ENCODE measurements at regions of chr2 and their contacts with region 1.

Region 1: GRCh38 chr2:55617175-55618024 is at the start of gene PPP4R3B:
- DNase-seq: peak; percentile 99 to 100
- ATAC-seq: peak; percentile 83 to 86
- H3K4me3 ChIP-seq: peak within 1 kb of the TSS; percentile 85 to 99 (median 94)
- H3K27ac ChIP-seq: peak within 1 kb of the TSS; percentile 90 to 100 (median 96)
- H3K4me1 ChIP-seq: peaks cover 28 to 44% of the 10 kb centered on the region in 2 donors
- H3K27me3 ChIP-seq: no peaks in the 10 kb centered on the region
- CTCF ChIP-seq: peak; percentile 56 to 84 (median 69)
- POLR2A ChIP-seq: peak; percentile 87 to 93
- total RNA-seq, gene PPP4R3B: 20.6 to 30.3 (median 25.4) TPM

Region 2: GRCh38 chr2:55232084-55232862 is 385.1 kb before region 1 on chr2 and contains the starts of genes CLHC1 and RPS27A:
- in situ Hi-C with region 1: no loop called
- intact Hi-C with region 1: loop called (anchors 10 kb)
- DNase-seq: peak; percentile 86 to 87
- ATAC-seq: peak; percentile 98
- H3K4me3 ChIP-seq: peak within 1 kb of the TSS; percentile 72 to 96 (median 87)
- H3K27ac ChIP-seq: peak within 1 kb of the TSS; percentile 89 to 96 (median 92)
- H3K4me1 ChIP-seq: peaks cover 23 to 24% of the 10 kb centered on the region in 2 donors
- H3K27me3 ChIP-seq: no peaks in the 10 kb centered on the region
- CTCF ChIP-seq: peak in 2 of 5 experiments; percentile 9 to 16
- POLR2A ChIP-seq: peak; percentile 85 to 87
- total RNA-seq, gene CLHC1: 0.46 to 4.9 (median 0.85) TPM in 3 of 4 donors, not detected in the other
- total RNA-seq, gene RPS27A: 884 to 1,266 (median 965) TPM

Region 3: DNA sequence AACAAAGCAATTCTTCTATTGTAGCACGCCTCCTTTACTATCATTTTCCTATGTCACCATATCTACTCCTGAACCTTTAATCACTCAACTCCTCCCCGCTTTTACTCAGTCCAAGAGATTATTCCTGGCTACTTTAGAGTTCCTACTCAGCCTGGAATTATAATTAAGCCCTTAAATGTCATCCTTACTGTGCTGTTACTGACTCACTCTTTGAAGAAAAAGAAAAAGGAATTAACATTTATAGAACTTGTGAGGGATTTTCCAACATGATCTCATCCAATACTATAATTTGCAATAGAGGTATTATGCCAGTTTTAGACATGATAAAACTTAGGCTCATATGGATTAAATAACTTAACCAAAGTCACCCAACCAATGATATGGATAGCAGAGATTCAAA is 259.5 kb before region 1 on chr2:
- in situ Hi-C with region 1: no loop called
- intact Hi-C with region 1: no loop called
- DNase-seq: no peak
- ATAC-seq: no peak
- H3K4me3 ChIP-seq: no peak overlapping the region
- H3K27ac ChIP-seq: no peak overlapping the region
- H3K4me1 ChIP-seq: no peaks in the 10 kb centered on the region
- H3K27me3 ChIP-seq: no peaks in the 10 kb centered on the region
- CTCF ChIP-seq: no peak
- POLR2A ChIP-seq: no peak

Region 4: GRCh38 chr2:55581874-55582547 is 35.4 kb before region 1 on chr2:
- in situ Hi-C with region 1: no loop called
- intact Hi-C with region 1: loop called (anchors 1 kb)
- DNase-seq: peak; percentile 37 to 70
- ATAC-seq: peak; percentile 97
- H3K4me3 ChIP-seq: peak overlapping the region in 1 of 4 donors; percentile 23
- H3K27ac ChIP-seq: peak overlapping the region; percentile 34 to 69 (median 63)
- H3K4me1 ChIP-seq: peaks cover 16 to 17% of the 10 kb centered on the region in 2 donors
- H3K27me3 ChIP-seq: no peaks in the 10 kb centered on the region
- CTCF ChIP-seq: no peak
- POLR2A ChIP-seq: no peak

Region 5: DNA sequence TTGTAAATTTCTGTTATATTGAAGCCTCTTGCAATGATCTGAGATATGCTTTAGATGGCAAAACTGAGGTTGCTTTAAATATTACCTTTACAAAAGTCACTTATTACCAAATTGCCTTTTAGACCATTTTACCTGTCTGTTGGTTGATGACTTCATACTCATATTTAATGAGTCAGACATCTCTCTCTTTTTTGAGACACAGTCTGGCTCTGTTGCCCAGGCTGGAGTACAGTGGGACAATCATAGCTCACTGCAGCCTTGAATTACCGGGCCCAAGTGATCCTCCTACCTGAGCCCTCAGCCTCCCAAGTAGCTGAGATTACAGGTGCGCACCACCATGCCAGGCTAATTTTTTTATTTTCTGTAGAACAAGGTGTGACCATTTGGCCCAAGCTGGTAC is 11.5 kb after region 1 on chr2:
- in situ Hi-C with region 1: no loop called
- intact Hi-C with region 1: no loop called
- DNase-seq: no peak
- ATAC-seq: no peak
- H3K4me3 ChIP-seq: no peak overlapping the region
- H3K27ac ChIP-seq: no peak overlapping the region
- H3K4me1 ChIP-seq: no peaks in the 10 kb centered on the region
- H3K27me3 ChIP-seq: no peaks in the 10 kb centered on the region
- CTCF ChIP-seq: no peak
- POLR2A ChIP-seq: no peak

Region 6: DNA sequence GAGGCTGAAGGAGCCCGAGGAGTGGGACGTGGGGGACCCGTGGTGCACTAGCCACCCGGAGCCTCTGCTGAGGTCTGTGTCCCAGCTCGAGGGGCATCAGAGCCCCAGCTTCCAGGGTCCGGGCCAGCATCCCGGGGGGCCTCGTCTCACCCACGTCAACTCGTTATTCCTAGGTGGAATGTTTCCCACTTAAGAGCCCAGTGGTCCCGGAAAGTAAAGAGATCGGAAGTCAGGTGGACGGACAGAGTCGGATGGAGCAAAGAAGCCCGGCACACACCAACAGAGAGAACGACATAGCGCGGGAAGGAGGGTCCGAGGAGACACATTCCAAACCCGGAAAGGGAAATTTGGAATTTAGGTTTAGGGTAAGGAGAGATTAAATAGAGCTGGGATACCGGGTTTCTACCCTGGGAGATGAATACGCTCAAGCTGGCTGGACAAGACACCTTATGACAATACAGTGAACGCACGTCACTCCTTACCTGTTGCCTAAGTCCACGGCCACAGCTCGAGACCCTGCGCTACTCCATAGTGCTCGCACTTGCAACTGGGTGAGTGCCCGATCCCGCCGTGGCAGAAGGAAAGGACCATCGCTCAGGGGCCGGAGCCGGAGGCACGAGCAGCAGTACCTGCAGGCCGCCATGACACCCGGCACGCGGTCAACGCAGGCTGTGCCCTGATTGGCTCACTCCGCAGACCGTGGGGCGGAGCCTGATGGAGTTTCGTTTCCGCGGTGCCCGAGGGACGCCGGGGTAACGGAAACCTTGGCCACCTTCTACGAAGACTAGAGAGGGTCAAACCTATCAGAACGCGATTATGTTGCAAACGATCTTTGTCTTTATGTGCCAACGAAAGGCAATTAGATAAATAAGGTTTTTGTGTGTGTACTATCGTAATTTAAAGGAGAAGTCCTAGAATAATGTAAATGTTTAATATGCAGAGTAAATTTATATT is 76.1 kb after region 1 on chr2 and contains the start of gene PNPT1:
- in situ Hi-C with region 1: no loop called
- intact Hi-C with region 1: loop called (anchors 2 kb)
- DNase-seq: peak; percentile 90 to 91
- ATAC-seq: peak; percentile 98 to 99
- H3K4me3 ChIP-seq: peak within 1 kb of the TSS; percentile 65 to 91 (median 86)
- H3K27ac ChIP-seq: peak within 1 kb of the TSS; percentile 66 to 78 (median 68)
- H3K4me1 ChIP-seq: no peaks in the 10 kb centered on the region
- H3K27me3 ChIP-seq: no peaks in the 10 kb centered on the region
- CTCF ChIP-seq: no peak
- POLR2A ChIP-seq: peak in 1 of 2 donors; percentile 46
- total RNA-seq, gene PNPT1: 14.1 to 26.0 (median 20.5) TPM